ENCODE measurements at regions of chr16 and their contacts with region 1.

Region 1: GRCh38 chr16:71564155-71564967 is 12.5 kb downstream of the TAT start:
- DNase-seq: no peak
- H3K4me3 Mint-ChIP-seq: peak overlapping the region; percentile 80
- H3K27ac Mint-ChIP-seq: peak overlapping the region; percentile 88
- H3K4me1 Mint-ChIP-seq: peaks cover 15% of the 10 kb centered on the region
- H3K27me3 Mint-ChIP-seq: no peaks in the 10 kb centered on the region

Region 2: DNA sequence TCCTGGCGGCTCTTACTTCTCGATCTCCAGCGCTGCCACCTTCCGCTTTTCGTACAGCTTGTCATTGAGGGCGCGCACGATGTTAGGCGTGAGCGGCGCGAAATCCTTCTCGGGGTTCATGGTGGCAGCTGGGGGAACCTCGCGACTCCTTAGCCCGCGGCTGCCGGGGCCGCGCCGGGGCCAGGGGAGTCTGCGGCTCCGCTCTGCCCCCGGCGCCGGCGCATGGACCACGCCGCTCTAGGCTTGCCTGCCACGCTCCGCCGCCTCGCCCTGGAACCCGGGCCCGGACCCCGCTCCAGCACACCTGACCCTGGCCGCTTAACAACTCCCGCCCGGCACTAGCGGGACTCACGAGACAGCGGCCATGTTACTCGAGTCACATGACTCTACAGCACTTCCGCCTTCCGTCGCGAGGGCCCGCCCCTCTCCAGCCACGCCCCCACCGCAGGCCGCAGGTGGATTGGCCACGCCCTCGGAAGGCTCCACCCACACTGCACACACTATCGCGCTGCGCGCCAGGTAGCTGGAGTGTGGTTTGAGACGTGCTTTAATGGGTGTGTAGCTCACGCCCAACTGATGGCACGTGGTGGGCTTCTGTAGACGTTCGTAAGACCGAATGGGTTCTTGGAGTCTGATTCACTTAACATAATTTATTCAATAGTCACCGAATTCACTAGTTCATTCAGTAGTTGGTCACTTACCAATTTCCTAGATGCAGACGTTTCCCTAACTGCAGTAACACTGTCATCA is 763.4 kb before region 1 on chr16 and contains the start of gene VAC14:
- CTCF ChIA-PET with region 1: no interaction called
- intact Hi-C with region 1: loop called (anchors 1 kb)
- DNase-seq: peak; percentile 98
- H3K4me3 Mint-ChIP-seq: peak within 1 kb of the TSS; percentile 88
- H3K27ac Mint-ChIP-seq: peak within 1 kb of the TSS; percentile 32
- H3K4me1 Mint-ChIP-seq: peaks cover 19% of the 10 kb centered on the region
- H3K27me3 Mint-ChIP-seq: no peaks in the 10 kb centered on the region
- total RNA-seq, gene VAC14: 19.6 to 20.6 TPM

Region 3: GRCh38 chr16:71537643-71538042 is 26.7 kb before region 1 on chr16:
- CTCF ChIA-PET with region 1: interaction called, 14 read pairs
- intact Hi-C with region 1: no loop called
- DNase-seq: peak; percentile 65
- H3K4me3 Mint-ChIP-seq: no peak overlapping the region
- H3K27ac Mint-ChIP-seq: no peak overlapping the region
- H3K4me1 Mint-ChIP-seq: no peaks in the 10 kb centered on the region
- H3K27me3 Mint-ChIP-seq: no peaks in the 10 kb centered on the region

Region 4: DNA sequence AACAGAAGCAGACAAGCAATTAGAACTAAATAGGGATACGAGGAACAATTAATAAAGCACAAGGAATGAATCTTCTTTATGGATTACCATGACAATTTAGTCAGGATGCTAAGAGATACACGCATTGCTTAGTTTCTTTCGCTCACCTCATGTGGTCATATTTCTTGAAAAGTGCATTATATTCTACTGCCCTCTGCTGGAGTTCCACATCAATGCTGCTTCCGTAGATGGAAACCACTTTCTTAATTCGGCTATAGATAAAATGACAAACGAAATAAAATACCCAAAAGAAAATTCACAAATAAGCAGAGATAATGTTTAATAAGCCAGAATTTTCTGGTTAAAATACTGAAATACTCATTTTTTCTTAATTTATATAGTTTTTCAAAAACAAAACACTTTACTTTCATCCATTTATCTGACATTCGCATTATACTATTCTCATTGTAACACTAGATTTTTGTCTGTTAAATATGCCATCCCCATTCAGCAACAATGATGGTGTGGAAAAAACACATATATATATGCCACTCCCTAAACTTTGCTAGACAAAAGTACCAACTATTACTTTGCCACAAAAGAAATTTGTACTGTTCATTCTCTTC is 182.2 kb after region 1 on chr16:
- CTCF ChIA-PET with region 1: no interaction called
- intact Hi-C with region 1: loop called (anchors 1 kb)
- DNase-seq: peak; percentile 49
- H3K4me3 Mint-ChIP-seq: no peak overlapping the region
- H3K27ac Mint-ChIP-seq: no peak overlapping the region
- H3K4me1 Mint-ChIP-seq: peaks cover 5% of the 10 kb centered on the region
- H3K27me3 Mint-ChIP-seq: no peaks in the 10 kb centered on the region

Region 5: DNA sequence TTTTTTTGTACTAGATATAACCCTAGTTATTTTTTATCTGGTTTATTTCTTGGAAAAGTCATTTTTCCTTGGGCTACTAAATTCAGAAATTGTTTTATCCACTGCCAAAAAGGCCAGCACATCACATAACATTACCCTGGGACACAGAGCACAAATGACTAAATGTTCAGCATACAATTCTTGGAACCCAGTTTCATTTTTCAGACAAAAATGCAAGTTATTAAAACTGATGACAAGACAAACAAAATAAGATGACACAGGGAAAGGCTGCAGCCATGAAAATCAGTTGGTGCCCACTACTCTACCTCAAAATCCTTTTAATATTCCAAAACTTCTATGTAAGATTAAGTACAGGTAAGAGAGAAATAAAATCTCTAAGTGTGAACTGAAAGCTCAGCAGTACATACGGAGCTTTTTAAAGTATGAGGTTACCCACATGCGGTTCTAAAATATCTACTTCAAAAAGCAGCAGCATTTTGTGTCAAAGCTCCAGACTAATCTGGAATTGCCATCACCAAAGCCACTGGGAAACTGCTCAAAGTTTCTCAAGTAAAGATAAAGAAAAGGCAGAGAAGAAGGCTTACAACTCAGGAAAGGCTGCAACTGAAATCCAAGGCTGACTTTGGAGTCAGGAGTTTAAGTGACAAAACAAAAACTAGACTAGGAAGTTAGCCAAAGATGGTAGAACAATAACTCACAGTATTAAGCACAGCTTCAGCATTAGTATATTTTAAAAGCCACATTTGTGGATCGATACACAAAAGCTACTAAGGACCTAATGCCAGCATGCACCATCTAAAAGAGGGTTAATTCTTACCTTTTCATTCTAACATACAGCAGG is 202.9 kb after region 1 on chr16:
- CTCF ChIA-PET with region 1: no interaction called
- intact Hi-C with region 1: no loop called
- DNase-seq: no peak
- H3K4me3 Mint-ChIP-seq: no peak overlapping the region
- H3K27ac Mint-ChIP-seq: peak overlapping the region; percentile 24
- H3K4me1 Mint-ChIP-seq: peaks cover 13% of the 10 kb centered on the region
- H3K27me3 Mint-ChIP-seq: no peaks in the 10 kb centered on the region

Region 6: GRCh38 chr16:71961066-71962039 is 397.0 kb after region 1 on chr16:
- CTCF ChIA-PET with region 1: interaction called, 10 read pairs
- intact Hi-C with region 1: loop called (anchors 1 kb)
- DNase-seq: peak; percentile 94
- H3K4me3 Mint-ChIP-seq: no peak overlapping the region
- H3K27ac Mint-ChIP-seq: no peak overlapping the region
- H3K4me1 Mint-ChIP-seq: peaks cover 2% of the 10 kb centered on the region
- H3K27me3 Mint-ChIP-seq: no peaks in the 10 kb centered on the region

Region 7: GRCh38 chr16:72085002-72085401 is 520.6 kb after region 1 on chr16:
- CTCF ChIA-PET with region 1: no interaction called
- intact Hi-C with region 1: no loop called
- DNase-seq: no peak
- H3K4me3 Mint-ChIP-seq: no peak overlapping the region
- H3K27ac Mint-ChIP-seq: no peak overlapping the region
- H3K4me1 Mint-ChIP-seq: no peaks in the 10 kb centered on the region
- H3K27me3 Mint-ChIP-seq: no peaks in the 10 kb centered on the region

Measured in activated naive CD4-positive, alpha-beta T cell treated with anti-CD3 and anti-CD28 coated beads for 36 hours (primary cell).